Activated CD4-positive, alpha-beta T cell treated with anti-CD3 and anti-CD28 coated beads, Interleukin-2, amount 10 ng/mL, durations not matched to agents 24 days and 14 days (primary cell): ENCODE measurements at regions of chr2 and their contacts with region 1.

Region 1: DNA sequence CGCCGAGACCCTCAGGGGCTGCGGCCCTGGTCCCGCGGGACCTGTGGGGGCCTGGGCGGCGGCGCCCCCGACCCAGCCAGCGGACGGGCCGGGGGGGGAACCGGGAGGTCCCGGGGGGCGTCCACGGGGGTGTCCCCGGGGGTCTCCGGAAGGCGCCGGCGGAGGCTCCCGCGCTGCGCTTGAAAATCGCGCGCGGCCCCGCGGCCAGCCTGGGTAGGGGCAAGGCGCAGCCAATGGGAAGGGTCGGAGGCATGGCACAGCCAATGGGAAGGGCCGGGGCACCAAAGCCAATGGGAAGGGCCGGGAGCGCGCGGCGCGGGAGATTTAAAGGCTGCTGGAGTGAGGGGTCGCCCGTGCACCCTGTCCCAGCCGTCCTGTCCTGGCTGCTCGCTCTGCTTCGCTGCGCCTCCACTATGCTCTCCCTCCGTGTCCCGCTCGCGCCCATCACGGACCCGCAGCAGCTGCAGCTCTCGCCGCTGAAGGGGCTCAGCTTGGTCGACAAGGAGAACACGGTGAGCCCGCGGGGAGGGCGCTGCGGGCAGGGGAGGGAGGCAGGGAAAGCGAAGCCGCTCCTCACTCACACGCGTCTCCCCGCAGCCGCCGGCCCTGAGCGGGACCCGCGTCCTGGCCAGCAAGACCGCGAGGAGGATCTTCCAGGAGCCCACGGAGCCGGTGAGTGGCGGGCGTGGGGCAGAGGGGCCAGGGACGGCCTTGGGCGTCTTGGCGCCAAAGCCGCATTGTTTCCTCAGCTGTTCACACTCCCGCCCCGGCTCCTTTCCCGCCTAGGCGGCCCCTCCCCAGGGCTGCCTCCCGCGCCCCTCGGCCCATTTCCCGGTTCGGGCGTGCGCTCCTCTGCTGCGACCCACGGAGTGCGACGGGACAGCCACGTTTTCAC is at the start of gene RRM2:
- DNase-seq: peak; percentile 98
- H3K4me3 Mint-ChIP-seq: peak within 1 kb of the TSS; percentile 94
- H3K27ac Mint-ChIP-seq: peak within 1 kb of the TSS; percentile 97
- H3K4me1 Mint-ChIP-seq: peaks cover 54% of the 10 kb centered on the region
- H3K27me3 Mint-ChIP-seq: no peaks in the 10 kb centered on the region
- total RNA-seq, gene RRM2: 378 and 383 TPM in 2 replicates

Region 2: DNA sequence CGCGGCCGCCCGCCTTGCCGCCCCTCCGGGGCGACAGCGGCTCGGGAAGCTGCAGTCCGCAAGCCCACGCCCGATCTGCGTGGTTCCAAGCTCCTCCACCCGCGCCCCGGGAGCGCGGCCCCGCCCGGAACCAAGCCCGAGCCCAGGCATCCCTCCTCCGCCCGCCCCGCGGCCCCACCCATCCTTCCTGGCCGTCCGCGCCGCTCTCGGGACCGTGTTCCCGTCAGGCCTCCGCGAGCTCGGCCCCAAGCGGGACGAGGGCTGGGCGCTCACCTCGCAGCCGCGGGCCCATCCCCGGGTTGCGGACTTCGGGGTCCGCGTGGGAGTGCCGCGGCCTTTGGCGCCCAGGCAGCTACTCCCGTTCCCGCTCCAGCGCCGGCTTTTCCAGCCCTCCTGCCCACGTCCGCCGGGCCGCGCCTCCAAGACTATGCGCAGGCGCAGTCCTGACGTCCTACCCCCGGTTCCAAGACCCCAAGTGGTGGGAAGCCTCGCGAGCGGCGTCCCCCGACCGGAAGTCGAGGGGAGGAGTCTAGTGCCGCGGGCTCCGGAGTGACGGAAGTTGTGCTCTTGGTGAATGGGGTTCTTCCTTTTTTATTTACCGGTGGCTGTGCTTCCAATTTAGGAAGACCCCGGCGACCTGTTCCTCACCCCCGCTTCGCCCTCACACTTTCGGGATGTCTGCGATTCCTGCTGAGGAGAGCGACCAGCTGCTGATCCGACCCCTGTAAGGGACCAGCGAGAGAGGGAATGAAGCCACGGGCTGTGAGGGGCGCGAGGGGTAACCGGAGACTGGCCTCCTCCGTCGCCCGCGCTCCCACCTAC is 699.3 kb before region 1 on chr2 and contains the starts of genes CPSF3 and ITGB1BP1:
- intact Hi-C with region 1: loop called (anchors 5 kb)
- DNase-seq: peak; percentile 99
- H3K4me3 Mint-ChIP-seq: no peak within 1 kb of the TSS
- H3K27ac Mint-ChIP-seq: peak within 1 kb of the TSS; percentile 94
- H3K4me1 Mint-ChIP-seq: peaks cover 34% of the 10 kb centered on the region
- H3K27me3 Mint-ChIP-seq: no peaks in the 10 kb centered on the region
- total RNA-seq, gene CPSF3: 81.4 TPM in 2 replicates
- total RNA-seq, gene ITGB1BP1: 121 and 131 TPM in 2 replicates

Region 3: GRCh38 chr2:9843229-9844035 is 279.2 kb before region 1 on chr2 and contains the start of gene TAF1B:
- intact Hi-C with region 1: loop called (anchors 1 kb)
- DNase-seq: peak; percentile 97
- H3K4me3 Mint-ChIP-seq: peak within 1 kb of the TSS; percentile 92
- H3K27ac Mint-ChIP-seq: peak within 1 kb of the TSS; percentile 92
- H3K4me1 Mint-ChIP-seq: peaks cover 34% of the 10 kb centered on the region
- H3K27me3 Mint-ChIP-seq: no peaks in the 10 kb centered on the region
- total RNA-seq, gene TAF1B: 21.9 and 22.7 TPM in 2 replicates

Region 4: GRCh38 chr2:10079870-10080535 is 42.6 kb before region 1 on chr2 and contains the start of gene CYS1:
- intact Hi-C with region 1: loop called (anchors 2 kb)
- DNase-seq: peak; percentile 78
- H3K4me3 Mint-ChIP-seq: peak within 1 kb of the TSS; percentile 81
- H3K27ac Mint-ChIP-seq: peak within 1 kb of the TSS; percentile 75
- H3K4me1 Mint-ChIP-seq: peaks cover 30% of the 10 kb centered on the region
- H3K27me3 Mint-ChIP-seq: peaks cover 73% of the 10 kb centered on the region
- total RNA-seq, gene CYS1: 0.24 and 0.63 TPM in 2 replicates

Region 5: GRCh38 chr2:10331027-10331701 is 208.5 kb after region 1 on chr2:
- intact Hi-C with region 1: loop called (anchors 1 kb)
- DNase-seq: peak; percentile 90
- H3K4me3 Mint-ChIP-seq: peak overlapping the region; percentile 95
- H3K27ac Mint-ChIP-seq: peak overlapping the region; percentile 92
- H3K4me1 Mint-ChIP-seq: peaks cover 68% of the 10 kb centered on the region
- H3K27me3 Mint-ChIP-seq: no peaks in the 10 kb centered on the region

Region 6: DNA sequence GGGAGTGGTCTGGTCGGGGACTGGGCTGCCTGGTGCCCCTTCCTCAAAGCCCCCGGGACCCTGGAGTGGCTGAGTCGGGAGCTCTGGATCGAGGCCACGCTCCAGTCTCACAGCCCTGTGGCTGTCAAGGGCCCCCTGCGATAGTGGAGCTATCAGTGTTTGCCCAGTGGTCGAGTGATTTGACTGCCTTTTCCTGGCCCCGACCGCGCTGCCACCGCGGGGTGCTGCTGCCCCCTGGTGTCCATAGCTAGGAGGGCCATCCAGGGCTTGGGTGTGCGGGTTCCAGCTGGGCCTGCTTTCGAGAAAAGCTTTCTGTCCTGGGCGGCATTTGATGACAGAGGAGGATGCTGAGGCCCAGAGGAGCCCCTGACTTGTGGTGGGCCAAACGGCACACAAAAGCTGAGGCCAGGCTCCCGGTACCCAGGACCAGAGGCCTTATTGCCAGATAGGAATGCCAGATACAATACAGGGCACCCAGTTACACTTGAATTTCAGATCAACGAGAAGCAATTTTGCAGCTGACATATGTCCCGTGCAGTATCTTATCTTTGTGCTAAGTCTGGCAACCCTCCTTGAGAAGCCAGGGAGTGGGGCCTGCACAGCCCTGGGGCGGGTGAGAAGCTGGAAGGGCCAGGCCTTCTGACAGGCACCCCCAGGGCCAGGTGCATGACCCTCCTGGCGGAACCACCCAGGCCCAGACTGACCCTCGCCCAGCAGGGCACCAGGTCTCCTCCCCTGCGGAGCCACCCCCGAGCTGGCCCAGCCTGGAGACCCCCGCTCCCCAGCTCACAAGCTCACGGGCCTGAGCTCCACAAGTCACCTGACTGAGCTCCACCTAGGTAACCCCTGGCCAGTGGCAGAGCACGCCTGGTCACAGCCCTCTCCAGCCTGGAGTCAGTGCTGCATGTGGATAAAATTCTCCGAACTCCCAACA is 312.5 kb after region 1 on chr2:
- intact Hi-C with region 1: loop called (anchors 1 kb)
- DNase-seq: peak; percentile 94
- H3K4me3 Mint-ChIP-seq: peak overlapping the region; percentile 23
- H3K27ac Mint-ChIP-seq: no peak overlapping the region
- H3K4me1 Mint-ChIP-seq: peaks cover 12% of the 10 kb centered on the region
- H3K27me3 Mint-ChIP-seq: peaks cover 4% of the 10 kb centered on the region

Region 7: DNA sequence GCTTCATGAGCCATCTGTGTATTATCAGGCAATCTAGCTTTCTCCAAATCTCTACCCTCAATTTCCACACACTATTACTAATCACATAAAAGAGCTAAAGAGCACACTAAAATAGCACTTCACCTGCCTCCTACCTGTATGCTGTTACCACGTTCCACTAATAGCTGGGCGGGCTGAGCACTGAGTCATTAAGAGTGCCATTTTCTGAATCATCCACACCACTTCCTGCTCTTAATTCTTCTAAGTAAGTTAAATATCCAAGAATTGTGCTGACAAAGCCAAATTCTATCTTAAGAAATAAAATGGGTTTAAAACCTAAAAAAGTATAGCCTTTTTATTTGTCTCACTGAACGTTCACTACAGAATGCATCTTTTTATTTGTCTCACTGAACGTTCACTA is 531.4 kb after region 1 on chr2:
- intact Hi-C with region 1: loop called (anchors 2 kb)
- DNase-seq: peak; percentile 78
- H3K4me3 Mint-ChIP-seq: peak overlapping the region; percentile 72
- H3K27ac Mint-ChIP-seq: peak overlapping the region; percentile 81
- H3K4me1 Mint-ChIP-seq: peaks cover 47% of the 10 kb centered on the region
- H3K27me3 Mint-ChIP-seq: no peaks in the 10 kb centered on the region